Transverse colon (tissue), 4 donors: ENCODE measurements at regions of chr21 and their contacts with region 1.

Region 1: DNA sequence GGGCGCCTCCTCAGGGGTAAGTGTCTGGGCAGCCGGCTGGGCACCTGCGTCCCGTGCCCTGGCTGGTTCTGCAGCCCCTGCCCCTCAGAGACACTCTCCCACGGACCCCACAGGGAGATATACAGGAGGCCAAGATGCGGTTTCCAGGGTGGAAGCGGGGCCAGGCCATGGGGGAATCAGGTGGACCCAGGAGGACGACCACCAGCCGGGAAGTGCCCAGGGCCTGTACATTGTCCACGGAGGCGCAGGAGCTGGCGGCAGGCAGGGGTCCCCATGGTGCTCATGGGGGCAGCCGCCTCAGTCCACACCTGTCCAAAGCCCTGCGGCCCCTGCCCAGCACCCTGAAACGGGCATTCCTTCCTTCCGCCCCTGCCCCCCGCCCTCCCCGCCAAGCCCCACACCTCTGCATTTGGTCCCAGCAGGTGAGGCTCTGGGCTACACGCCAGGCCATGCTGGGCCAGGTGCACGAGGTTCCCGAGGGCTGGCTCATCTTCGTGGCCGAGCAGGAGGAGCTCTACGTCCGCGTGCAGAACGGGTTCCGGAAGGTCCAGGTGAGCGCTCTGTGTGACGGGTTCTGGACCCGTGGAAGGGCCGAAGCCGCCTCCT is 36.7 kb downstream of the SLC19A1 start:
- DNase-seq: peak; percentile 27
- H3K4me3 ChIP-seq: no peak overlapping the region
- H3K27ac ChIP-seq: no peak overlapping the region
- H3K4me1 ChIP-seq: no peaks in the 10 kb centered on the region
- H3K27me3 ChIP-seq: peaks cover 8% of the 10 kb centered on the region
- CTCF ChIP-seq: no peak
- EP300 ChIP-seq: no peak
- POLR2A ChIP-seq: no peak

Region 2: DNA sequence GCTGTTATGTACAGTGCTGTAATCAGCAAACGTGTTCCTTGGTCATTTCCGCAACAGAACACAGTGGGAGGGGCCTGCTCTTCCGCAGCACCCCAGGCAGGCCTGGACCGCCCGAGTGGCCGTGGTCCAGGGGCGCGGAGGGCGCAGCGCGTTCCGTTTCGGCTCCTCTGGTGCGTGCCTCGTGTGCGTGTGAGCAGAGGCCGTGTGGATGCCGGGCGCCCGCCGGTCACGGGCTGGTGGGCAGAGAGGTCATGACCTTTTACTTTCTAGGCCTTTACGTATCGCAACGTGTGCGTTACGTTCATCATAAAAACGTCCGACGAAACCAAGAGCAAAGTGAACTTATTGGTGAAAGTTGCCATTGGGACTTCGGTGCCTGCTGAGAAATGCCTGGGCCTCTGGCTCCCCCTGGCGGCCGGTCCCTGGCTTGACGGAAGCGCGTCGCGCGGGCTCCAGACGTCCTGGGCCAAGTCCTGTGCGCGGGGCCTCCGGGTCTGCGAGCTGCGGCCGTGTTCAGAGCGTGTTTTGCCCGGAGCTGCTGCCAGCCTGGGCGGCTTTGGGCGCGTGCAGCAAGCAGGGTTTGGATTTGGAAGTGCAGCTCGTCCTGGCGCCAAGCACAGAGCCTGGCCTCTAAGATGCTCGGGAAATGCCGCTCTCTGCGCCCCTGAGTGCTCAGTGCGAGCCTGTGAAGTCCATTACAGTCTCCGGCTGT is 66.2 kb before region 1 on chr21:
- in situ Hi-C with region 1: no loop called
- intact Hi-C with region 1: no loop called
- DNase-seq: peak; percentile 83
- H3K4me3 ChIP-seq: peak overlapping the region in 2 of 4 donors; percentile 19 to 41
- H3K27ac ChIP-seq: peak overlapping the region; percentile 65 to 73 (median 70)
- H3K4me1 ChIP-seq: peaks cover 0 to 13% (median 8%) of the 10 kb centered on the region in 4 donors
- H3K27me3 ChIP-seq: no peaks in the 10 kb centered on the region
- CTCF ChIP-seq: peak; percentile 97 to 98 (median 98)
- EP300 ChIP-seq: peak; percentile 63
- POLR2A ChIP-seq: no peak

Region 3: DNA sequence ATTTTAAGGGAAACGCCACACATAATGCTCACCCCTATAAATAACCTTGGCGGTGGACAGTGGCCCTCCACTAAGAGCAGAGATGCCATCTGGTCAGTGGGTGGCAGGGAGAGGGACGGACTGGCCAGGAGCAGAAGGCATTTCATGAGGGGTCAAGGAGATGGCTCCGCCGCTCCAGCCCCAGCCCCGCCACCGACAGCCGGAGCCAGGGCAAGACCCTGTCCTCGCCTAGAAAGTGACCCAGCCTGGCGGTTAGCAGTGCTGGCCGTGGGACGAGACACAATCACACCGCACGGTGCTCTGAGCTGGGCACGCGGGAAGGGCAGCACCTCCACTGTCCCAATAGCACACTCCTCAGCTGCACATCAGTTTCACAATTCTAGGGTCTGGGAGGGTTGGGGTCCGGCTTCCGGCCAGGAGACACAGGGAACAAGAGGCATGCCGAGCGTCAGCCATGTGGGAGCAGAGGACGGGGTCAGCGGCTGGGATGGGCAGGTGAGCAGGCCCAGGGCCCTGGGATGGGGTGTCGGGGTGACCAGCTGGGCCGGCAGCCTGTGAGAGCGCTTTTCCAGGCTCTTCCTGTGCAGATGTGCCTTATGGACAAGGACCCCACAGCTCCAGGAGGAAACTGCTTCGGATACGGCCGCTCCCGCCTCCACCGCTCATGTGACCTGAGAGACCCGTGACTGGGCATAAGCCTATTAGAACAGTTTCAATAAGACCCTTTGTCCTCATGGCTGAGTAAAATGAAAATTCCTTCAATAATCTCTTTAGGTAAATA is 31.0 kb after region 1 on chr21:
- in situ Hi-C with region 1: no loop called
- intact Hi-C with region 1: loop called (anchors 1 kb)
- DNase-seq: peak; percentile 6
- H3K4me3 ChIP-seq: no peak overlapping the region
- H3K27ac ChIP-seq: no peak overlapping the region
- H3K4me1 ChIP-seq: peaks cover 12 to 36% (median 30%) of the 10 kb centered on the region in 4 donors
- H3K27me3 ChIP-seq: no peaks in the 10 kb centered on the region
- CTCF ChIP-seq: no peak
- EP300 ChIP-seq: no peak
- POLR2A ChIP-seq: no peak

Region 4: DNA sequence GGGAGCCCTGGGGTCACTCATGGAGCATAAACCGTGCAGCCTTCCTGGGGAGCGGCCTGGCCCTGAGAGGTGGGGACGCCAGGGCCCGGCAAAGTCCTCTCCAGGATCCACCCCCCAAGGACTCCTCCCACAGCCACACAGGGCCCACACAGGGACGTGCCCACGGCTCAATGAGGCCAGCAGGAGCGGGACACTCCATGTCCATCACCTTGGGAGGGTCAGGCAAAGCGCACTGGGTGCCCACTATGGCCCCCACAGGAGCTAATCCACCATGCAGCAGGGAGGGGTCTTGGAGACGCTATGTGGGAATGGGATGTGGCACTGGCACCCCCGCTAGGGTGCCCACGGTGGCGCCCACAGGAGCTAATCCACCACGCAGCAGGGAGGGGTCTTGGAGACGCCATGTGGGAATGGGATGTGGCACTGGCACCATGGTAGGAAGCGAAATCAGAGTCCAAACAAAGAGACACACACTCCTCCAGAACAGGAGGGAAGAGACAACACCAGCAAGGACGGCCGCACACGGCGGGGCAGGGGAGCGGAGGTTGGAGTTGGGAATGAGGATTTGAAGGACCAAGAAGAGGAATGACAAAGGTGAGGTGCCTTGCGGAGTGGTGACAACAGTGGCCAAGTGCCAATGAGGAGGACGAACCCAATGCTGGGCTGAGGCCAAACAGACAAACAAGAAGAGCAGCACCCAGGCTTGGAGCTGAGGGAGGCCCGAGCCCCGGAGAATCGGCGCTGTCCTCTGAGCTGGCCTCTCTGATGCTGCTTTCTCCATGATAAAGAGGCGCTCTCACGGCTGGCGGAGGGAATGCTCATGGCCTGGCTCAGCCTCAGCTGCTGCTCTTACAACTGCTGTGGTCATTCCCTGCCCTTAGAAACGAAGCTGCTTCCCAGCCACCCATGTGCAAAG is 54.8 kb after region 1 on chr21:
- in situ Hi-C with region 1: no loop called
- intact Hi-C with region 1: no loop called
- DNase-seq: no peak
- H3K4me3 ChIP-seq: no peak overlapping the region
- H3K27ac ChIP-seq: no peak overlapping the region
- H3K4me1 ChIP-seq: peaks cover 0 to 6% (median 6%) of the 10 kb centered on the region in 4 donors
- H3K27me3 ChIP-seq: peaks cover 15% of the 10 kb centered on the region
- CTCF ChIP-seq: no peak
- EP300 ChIP-seq: no peak
- POLR2A ChIP-seq: no peak